T-cell (primary cell): ENCODE measurements at regions of chr1 and their contacts with region 1.

Region 1: DNA sequence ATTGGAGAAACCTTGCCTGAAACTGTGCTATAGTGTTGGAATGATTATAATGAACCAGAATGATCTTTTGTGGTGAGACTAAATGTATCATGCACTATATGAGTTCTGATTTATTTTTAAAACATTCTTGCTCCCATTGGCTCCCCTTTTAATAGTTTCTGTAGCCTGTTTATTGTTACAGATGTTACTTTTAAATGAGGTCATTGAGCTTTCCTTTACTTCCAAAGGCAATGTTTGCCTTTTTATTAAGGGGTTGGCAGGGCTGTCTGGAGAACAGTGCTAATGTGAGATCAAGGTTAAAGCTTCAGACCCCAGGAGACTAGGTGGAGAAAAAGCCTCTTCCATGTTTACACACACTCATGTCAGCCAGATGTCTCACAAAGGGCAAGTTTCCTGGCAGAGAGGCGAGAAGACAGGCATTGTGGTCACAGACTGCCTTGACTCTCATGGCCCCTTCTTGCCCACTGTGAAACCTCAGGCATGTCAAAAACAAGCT is 120.6 kb upstream of the RAVER2 start:
- DNase-seq: no peak
- ATAC-seq: no peak
- H3K4me3 ChIP-seq: no peak overlapping the region
- H3K4me3 Mint-ChIP-seq: no peak overlapping the region
- H3K27ac ChIP-seq: no peak overlapping the region
- H3K27ac Mint-ChIP-seq: peak overlapping the region in 1 of 2 donors; percentile 24
- H3K4me1 ChIP-seq: no peaks in the 10 kb centered on the region
- H3K4me1 Mint-ChIP-seq: peaks cover 0 to 6% (median 4%) of the 10 kb centered on the region in 3 donors
- H3K27me3 ChIP-seq: no peaks in the 10 kb centered on the region
- H3K27me3 Mint-ChIP-seq: no peaks in the 10 kb centered on the region

Region 2: GRCh38 chr1:63148825-63149645 is 1475.2 kb before region 1 on chr1:
- CTCF ChIA-PET with region 1: no interaction called
- POLR2A ChIA-PET with region 1: interaction called in 1 of 2 experiments, 10 read pairs
- DNase-seq: no peak
- ATAC-seq: no peak
- H3K4me3 ChIP-seq: no peak overlapping the region
- H3K4me3 Mint-ChIP-seq: no peak overlapping the region
- H3K27ac ChIP-seq: no peak overlapping the region
- H3K27ac Mint-ChIP-seq: no peak overlapping the region
- H3K4me1 ChIP-seq: no peaks in the 10 kb centered on the region
- H3K4me1 Mint-ChIP-seq: no peaks in the 10 kb centered on the region
- H3K27me3 ChIP-seq: peaks cover 0 to 2% of the 10 kb centered on the region in 2 experiments
- H3K27me3 Mint-ChIP-seq: peaks cover 13 to 19% of the 10 kb centered on the region in 2 donors

Region 3: DNA sequence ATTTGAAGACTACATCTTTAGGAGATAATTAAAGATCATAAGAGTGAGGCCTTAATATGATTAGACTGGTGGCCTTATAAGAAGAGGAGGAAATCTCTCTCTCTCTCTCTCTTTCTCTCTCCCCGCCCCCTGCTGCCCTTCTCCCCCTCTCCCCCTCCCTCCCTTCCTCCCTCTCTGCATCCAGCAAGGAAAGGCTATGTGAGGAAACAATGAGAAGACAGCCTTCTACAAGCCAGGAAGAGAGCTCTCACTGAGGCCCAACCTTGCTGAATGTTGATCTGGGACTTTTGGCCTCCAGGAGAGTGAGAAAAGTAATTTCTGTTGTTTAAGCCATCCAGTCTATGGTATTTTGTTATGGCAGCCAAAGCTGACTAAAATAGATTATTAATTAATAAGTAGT is 1280.3 kb before region 1 on chr1:
- CTCF ChIA-PET with region 1: no interaction called
- POLR2A ChIA-PET with region 1: interaction called in 1 of 2 experiments, 12 read pairs
- DNase-seq: no peak
- ATAC-seq: no peak
- H3K4me3 ChIP-seq: no peak overlapping the region
- H3K4me3 Mint-ChIP-seq: no peak overlapping the region
- H3K27ac ChIP-seq: no peak overlapping the region
- H3K27ac Mint-ChIP-seq: no peak overlapping the region
- H3K4me1 ChIP-seq: no peaks in the 10 kb centered on the region
- H3K4me1 Mint-ChIP-seq: no peaks in the 10 kb centered on the region
- H3K27me3 ChIP-seq: peaks cover 0 to 17% of the 10 kb centered on the region in 2 experiments
- H3K27me3 Mint-ChIP-seq: peaks cover 33 to 38% of the 10 kb centered on the region in 2 donors

Region 4: GRCh38 chr1:65045022-65045817 is 421.0 kb after region 1 on chr1:
- CTCF ChIA-PET with region 1: no interaction called
- POLR2A ChIA-PET with region 1: no interaction called
- DNase-seq: no peak
- ATAC-seq: no peak
- H3K4me3 ChIP-seq: no peak overlapping the region
- H3K4me3 Mint-ChIP-seq: no peak overlapping the region
- H3K27ac ChIP-seq: no peak overlapping the region
- H3K27ac Mint-ChIP-seq: peak overlapping the region in 1 of 2 donors; percentile 44
- H3K4me1 ChIP-seq: peaks cover 8 to 15% of the 10 kb centered on the region in 2 experiments
- H3K4me1 Mint-ChIP-seq: peaks cover 55 to 66% (median 60%) of the 10 kb centered on the region in 3 donors
- H3K27me3 ChIP-seq: no peaks in the 10 kb centered on the region
- H3K27me3 Mint-ChIP-seq: no peaks in the 10 kb centered on the region